ENCODE measurements at regions of chr6 and their contacts with region 1.

Region 1: GRCh38 chr6:111873178-111874024 is at the start of gene FYN:
- DNase-seq: peak; percentile 98
- H3K4me3 ChIP-seq: peak within 1 kb of the TSS; percentile 88 to 91
- H3K4me3 Mint-ChIP-seq: peak within 1 kb of the TSS; percentile 96 to 99 (median 98)
- H3K27ac ChIP-seq: peak within 1 kb of the TSS; percentile 88
- H3K27ac Mint-ChIP-seq: peak within 1 kb of the TSS; percentile 93 to 99 (median 98)
- H3K4me1 ChIP-seq: peaks cover 38% of the 10 kb centered on the region
- H3K4me1 Mint-ChIP-seq: peaks cover 27 to 55% (median 37%) of the 10 kb centered on the region in 4 donors
- H3K27me3 ChIP-seq: no peaks in the 10 kb centered on the region
- H3K27me3 Mint-ChIP-seq: no peaks in the 10 kb centered on the region
- total RNA-seq, gene FYN: 664 to 713 TPM

Region 2: DNA sequence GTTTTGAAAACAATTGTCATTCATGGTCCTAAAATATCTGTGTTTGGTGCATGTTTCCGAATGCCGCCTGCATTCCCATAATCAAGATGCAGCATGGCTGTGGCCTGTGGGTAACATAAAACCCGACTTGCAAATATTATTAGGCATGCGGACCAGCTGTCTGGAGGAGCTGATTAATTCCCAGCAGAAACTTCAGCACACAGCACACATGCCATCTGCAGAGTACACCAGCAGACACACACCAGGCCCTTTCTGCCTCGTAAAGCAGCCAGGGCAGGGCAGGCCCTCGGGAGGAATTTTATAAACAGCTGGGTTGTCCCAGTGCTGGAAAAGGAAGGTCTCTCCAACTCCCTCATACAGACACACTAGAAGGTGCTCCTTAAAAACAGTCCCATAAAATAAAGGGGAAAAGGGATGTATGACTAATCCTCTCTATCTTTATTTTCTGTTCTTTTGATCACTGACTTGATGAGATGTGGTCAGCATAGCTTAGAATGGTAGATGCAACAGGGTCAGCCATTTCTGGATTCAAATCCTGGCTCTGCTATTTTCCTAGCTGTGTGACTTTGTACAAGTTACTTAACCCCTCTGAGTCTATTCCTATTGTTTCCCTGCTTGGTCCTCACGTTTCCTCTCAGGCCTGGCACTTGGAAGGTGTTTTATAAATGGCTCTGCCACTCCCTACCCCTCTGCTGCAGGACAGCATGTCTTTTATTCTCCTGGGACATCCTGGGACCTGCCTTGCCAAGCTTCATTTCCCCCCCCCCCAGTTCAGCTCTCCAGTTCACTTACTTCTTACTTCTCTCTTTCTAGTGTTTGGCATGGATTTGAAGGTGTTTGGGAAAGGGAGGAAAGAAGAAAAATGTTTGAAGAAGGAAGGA is 181.8 kb before region 1 on chr6:
- CTCF ChIA-PET with region 1: no interaction called
- POLR2A ChIA-PET with region 1: no interaction called
- intact Hi-C with region 1: no loop called
- DNase-seq: no peak
- H3K4me3 ChIP-seq: no peak overlapping the region
- H3K4me3 Mint-ChIP-seq: peak overlapping the region in 1 of 8 donors; percentile 66
- H3K27ac ChIP-seq: no peak overlapping the region
- H3K27ac Mint-ChIP-seq: peak overlapping the region; percentile 27 to 92 (median 86)
- H3K4me1 ChIP-seq: peaks cover 53% of the 10 kb centered on the region
- H3K4me1 Mint-ChIP-seq: peaks cover 54 to 93% (median 73%) of the 10 kb centered on the region in 4 donors
- H3K27me3 ChIP-seq: no peaks in the 10 kb centered on the region
- H3K27me3 Mint-ChIP-seq: no peaks in the 10 kb centered on the region

Region 3: GRCh38 chr6:111709615-111710398 is 163.6 kb before region 1 on chr6:
- CTCF ChIA-PET with region 1: interaction called, 9 read pairs
- POLR2A ChIA-PET with region 1: interaction called, 7 read pairs
- intact Hi-C with region 1: loop called (anchors 1 kb)
- DNase-seq: peak; percentile 74 to 79 (median 76)
- H3K4me3 ChIP-seq: no peak overlapping the region
- H3K4me3 Mint-ChIP-seq: peak overlapping the region; percentile 26 to 82 (median 44)
- H3K27ac ChIP-seq: peak overlapping the region; percentile 42
- H3K27ac Mint-ChIP-seq: peak overlapping the region; percentile 91 to 97 (median 95)
- H3K4me1 ChIP-seq: peaks cover 51% of the 10 kb centered on the region
- H3K4me1 Mint-ChIP-seq: peaks cover 40 to 60% (median 48%) of the 10 kb centered on the region in 4 donors
- H3K27me3 ChIP-seq: no peaks in the 10 kb centered on the region
- H3K27me3 Mint-ChIP-seq: no peaks in the 10 kb centered on the region

Region 4: DNA sequence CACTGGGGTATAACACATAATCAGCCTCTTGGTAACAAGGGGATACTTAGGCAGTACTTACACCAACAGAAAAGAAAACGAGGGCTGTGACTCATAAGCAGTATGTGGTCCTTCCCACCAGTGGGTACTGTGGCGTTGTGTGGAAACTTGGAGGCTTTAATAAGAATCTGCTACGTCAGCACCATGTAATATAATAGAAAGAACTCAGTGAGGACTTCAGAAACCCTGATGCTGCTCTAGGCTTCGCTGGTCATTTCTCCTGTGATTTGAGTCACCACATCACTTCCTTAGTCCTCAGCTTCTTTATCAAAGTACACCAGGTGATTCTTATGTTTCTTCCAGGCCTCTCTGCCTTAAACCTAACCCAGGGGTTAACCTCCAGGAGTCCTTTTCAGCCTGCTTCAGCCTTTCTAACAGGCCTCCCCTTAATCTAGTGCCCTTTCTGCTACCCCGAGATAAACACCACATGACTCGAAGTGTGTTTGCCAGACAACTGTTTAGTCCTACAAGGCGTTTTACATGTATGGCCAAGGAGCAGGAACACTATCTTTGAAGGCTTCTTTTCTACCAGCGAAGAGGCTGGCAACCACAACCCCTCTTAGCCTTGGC is 68.7 kb before region 1 on chr6:
- CTCF ChIA-PET with region 1: interaction called, 7 read pairs
- POLR2A ChIA-PET with region 1: interaction called, 9 read pairs
- intact Hi-C with region 1: loop called (anchors 1 kb)
- DNase-seq: peak; percentile 70 to 90 (median 74)
- H3K4me3 ChIP-seq: peak overlapping the region in 1 of 2 donors; percentile 15
- H3K4me3 Mint-ChIP-seq: peak overlapping the region; percentile 34 to 86 (median 72)
- H3K27ac ChIP-seq: peak overlapping the region; percentile 77
- H3K27ac Mint-ChIP-seq: peak overlapping the region; percentile 94 to 99 (median 96)
- H3K4me1 ChIP-seq: peaks cover 98% of the 10 kb centered on the region
- H3K4me1 Mint-ChIP-seq: peaks cover 64 to 98% (median 84%) of the 10 kb centered on the region in 4 donors
- H3K27me3 ChIP-seq: no peaks in the 10 kb centered on the region
- H3K27me3 Mint-ChIP-seq: no peaks in the 10 kb centered on the region

Region 5: DNA sequence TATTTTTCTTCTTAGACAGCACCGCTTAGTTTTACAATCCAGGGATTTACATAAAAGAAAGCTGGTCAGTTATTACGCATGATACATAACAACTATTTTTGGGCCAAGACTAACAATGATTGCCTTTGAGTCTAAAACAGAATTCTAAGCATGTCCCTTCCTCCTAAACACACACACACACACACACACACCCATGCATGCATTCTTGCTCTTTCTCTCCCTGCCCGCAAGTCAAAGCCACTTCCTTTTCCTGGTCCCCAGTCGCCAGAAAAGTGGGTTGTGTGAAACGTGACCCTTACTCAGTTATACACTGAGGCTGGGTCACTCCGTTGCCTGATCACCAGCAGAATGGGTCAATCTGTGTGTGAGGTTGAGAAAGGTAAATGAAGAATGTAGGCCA is 31.6 kb before region 1 on chr6:
- CTCF ChIA-PET with region 1: interaction called, 9 read pairs
- POLR2A ChIA-PET with region 1: interaction called, 64 read pairs
- intact Hi-C with region 1: loop called (anchors 1 kb)
- DNase-seq: peak; percentile 65 to 69 (median 66)
- H3K4me3 ChIP-seq: peak overlapping the region in 1 of 2 donors; percentile 29
- H3K4me3 Mint-ChIP-seq: no peak overlapping the region
- H3K27ac ChIP-seq: peak overlapping the region; percentile 54
- H3K27ac Mint-ChIP-seq: no peak overlapping the region
- H3K4me1 ChIP-seq: peaks cover 100% of the 10 kb centered on the region
- H3K4me1 Mint-ChIP-seq: peaks cover 0 to 60% (median 29%) of the 10 kb centered on the region in 4 donors
- H3K27me3 ChIP-seq: no peaks in the 10 kb centered on the region
- H3K27me3 Mint-ChIP-seq: no peaks in the 10 kb centered on the region

Region 6: GRCh38 chr6:111973118-111973761 is 99.8 kb after region 1 on chr6:
- CTCF ChIA-PET with region 1: interaction called, 3 read pairs
- POLR2A ChIA-PET with region 1: interaction called, 9 read pairs
- intact Hi-C with region 1: loop called (anchors 1 kb)
- DNase-seq: peak; percentile 63 to 91 (median 78)
- H3K4me3 ChIP-seq: peak overlapping the region in 1 of 2 donors; percentile 6
- H3K4me3 Mint-ChIP-seq: peak overlapping the region; percentile 61 to 79 (median 66)
- H3K27ac ChIP-seq: peak overlapping the region; percentile 75
- H3K27ac Mint-ChIP-seq: peak overlapping the region; percentile 89 to 99 (median 95)
- H3K4me1 ChIP-seq: peaks cover 29% of the 10 kb centered on the region
- H3K4me1 Mint-ChIP-seq: peaks cover 30 to 60% (median 48%) of the 10 kb centered on the region in 4 donors
- H3K27me3 ChIP-seq: no peaks in the 10 kb centered on the region
- H3K27me3 Mint-ChIP-seq: no peaks in the 10 kb centered on the region

Region 7: DNA sequence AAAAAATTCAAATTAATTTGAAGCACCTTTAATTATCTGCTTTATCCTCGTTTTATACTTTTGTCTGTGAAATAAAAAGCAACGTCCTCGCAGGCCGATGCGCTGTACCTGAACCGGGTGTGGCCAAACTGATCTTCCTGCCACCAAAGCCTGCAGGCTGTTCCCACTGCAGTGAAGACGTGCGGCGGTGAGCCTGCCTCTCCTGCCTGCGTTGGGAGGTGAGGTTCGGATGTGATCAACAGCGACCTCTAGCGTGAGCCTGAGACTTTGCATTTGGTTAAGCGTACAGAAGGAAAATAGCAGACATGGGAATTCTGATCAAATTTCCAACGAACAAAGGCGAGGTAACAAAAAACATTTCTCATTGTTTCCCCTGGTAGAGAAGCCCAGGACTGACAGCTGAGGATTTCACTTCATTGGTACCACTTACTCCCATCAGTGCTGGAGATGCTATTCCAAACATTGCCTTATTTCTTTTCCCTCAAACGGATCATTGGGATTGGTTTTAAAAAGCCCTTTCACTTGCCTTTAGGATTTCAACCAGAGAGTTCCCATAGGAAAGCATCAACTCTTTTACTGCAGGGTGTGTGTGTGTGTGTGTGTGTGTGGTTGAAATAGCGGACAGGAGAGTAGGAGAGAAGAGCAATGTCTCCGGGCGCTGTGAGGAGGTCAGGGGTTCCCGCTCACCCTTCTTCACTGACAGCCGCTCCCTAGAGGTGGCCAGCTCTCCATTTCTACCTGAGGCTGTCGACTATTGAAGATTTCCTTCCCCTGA is 123.9 kb after region 1 on chr6:
- CTCF ChIA-PET with region 1: interaction called, 19 read pairs
- POLR2A ChIA-PET with region 1: interaction called, 32 read pairs
- intact Hi-C with region 1: loop called (anchors 1 kb)
- DNase-seq: peak; percentile 76 to 79 (median 78)
- H3K4me3 ChIP-seq: peak overlapping the region in 1 of 2 donors; percentile 21
- H3K4me3 Mint-ChIP-seq: peak overlapping the region; percentile 64 to 85 (median 80)
- H3K27ac ChIP-seq: no peak overlapping the region
- H3K27ac Mint-ChIP-seq: peak overlapping the region; percentile 76 to 90 (median 85)
- H3K4me1 ChIP-seq: peaks cover 38% of the 10 kb centered on the region
- H3K4me1 Mint-ChIP-seq: peaks cover 39 to 47% (median 42%) of the 10 kb centered on the region in 4 donors
- H3K27me3 ChIP-seq: no peaks in the 10 kb centered on the region
- H3K27me3 Mint-ChIP-seq: no peaks in the 10 kb centered on the region